Naive thymus-derived CD8-positive, alpha-beta T cell (primary cell): ENCODE measurements at regions of chr11 and their contacts with region 1.

Region 1: DNA sequence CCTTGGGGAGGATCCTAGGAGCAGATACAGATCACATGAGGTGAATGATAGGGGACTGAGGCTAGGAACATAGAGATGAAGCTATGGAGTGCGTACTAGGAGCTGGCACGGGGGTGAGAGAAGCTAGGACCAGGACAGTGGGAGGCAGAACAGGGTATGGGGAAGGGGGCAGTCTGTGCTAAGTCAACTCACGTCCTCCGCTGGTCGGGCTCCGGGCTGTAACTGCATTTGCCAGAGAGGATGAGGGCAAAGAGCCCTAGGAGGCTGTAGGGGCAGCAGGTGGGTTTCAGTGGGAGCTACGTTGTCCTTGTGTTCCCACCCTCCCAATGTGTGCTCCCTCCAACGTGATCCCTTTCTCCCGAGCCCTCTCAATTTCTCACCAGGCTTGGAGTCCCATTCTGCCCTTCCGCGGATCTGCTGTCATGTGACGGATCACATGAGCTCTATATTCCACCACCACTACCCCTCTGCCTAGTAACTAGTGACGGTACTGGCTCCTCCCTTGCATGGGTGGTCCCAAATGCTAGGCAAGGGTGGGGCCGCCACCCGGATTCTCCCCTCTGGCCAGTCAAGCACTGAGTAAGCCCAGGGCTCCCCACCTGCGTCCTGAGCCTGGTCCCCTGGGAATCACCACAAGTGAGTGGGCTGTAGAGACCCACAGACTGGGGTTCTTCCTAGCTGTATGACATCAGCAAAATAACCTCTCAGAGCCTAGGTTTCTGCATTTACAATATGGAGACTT is at the start of gene TPP1:
- DNase-seq: peak; percentile 70 to 96 (median 91)
- ATAC-seq: peak; percentile 93 to 97
- H3K4me3 Mint-ChIP-seq: no peak within 1 kb of the TSS
- H3K27ac Mint-ChIP-seq: no peak within 1 kb of the TSS
- H3K4me1 Mint-ChIP-seq: peaks cover 11 to 20% (median 14%) of the 10 kb centered on the region in 4 donors
- H3K27me3 Mint-ChIP-seq: no peaks in the 10 kb centered on the region
- polyA plus RNA-seq, gene TPP1: 84.8 to 107 (median 85.1) TPM

Region 2: DNA sequence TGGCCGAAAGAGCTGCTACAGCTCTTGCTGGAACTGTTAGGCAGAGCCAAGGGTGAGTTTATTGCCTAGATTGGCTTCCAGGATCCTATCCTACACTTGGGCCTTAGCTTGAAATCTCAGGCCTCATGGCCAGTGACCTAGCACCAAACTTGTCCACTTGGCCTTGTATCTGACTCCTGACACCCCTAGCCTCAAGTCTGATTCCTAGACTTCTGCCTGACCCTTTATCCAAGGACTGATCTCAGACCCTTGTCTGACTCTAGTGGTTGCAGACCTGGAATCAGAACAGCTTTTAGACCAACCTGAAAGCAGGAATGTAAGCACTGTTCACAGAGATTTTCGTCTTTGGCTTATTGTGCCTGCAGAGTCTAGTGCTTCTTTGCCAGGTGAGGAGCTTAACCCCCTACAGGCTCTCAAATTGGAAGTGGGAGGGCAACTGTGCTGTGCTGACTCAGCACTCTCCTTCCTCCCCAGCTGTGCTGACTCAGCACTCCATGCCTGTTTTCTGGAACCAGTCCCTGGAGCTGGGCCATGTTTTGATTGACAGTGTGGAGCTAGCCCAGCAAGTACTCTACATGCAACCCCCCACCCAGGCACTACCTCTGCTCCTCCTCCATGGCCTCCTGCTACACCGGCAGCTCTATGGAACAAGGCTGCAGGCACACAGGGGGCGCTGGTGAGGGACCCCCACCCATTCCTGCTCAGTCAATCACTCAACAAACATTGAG is 50.8 kb before region 1 on chr11:
- POLR2A ChIA-PET with region 1: no interaction called
- DNase-seq: peak in 1 of 10 donors; percentile 13
- ATAC-seq: no peak
- H3K4me3 Mint-ChIP-seq: no peak overlapping the region
- H3K27ac Mint-ChIP-seq: peak overlapping the region in 2 of 10 donors; percentile 9 to 67
- H3K4me1 Mint-ChIP-seq: peaks cover 0 to 10% (median 1%) of the 10 kb centered on the region in 4 donors
- H3K27me3 Mint-ChIP-seq: no peaks in the 10 kb centered on the region

Region 3: GRCh38 chr11:6603287-6604080 is 15.7 kb before region 1 on chr11 and contains the starts of genes ILK and RRP8:
- POLR2A ChIA-PET with region 1: interaction called, 50 read pairs
- DNase-seq: peak; percentile 68 to 92 (median 80)
- ATAC-seq: peak; percentile 80 to 85
- H3K4me3 Mint-ChIP-seq: no peak within 1 kb of the TSS
- H3K27ac Mint-ChIP-seq: no peak within 1 kb of the TSS
- H3K4me1 Mint-ChIP-seq: peaks cover 16 to 33% (median 29%) of the 10 kb centered on the region in 4 donors
- H3K27me3 Mint-ChIP-seq: no peaks in the 10 kb centered on the region
- polyA plus RNA-seq, gene ILK: 63.7 to 72.5 (median 68.5) TPM
- polyA plus RNA-seq, gene RRP8: 17.8 to 25.9 (median 20.9) TPM

Region 4: GRCh38 chr11:6646918-6647679 is 27.9 kb after region 1 on chr11:
- POLR2A ChIA-PET with region 1: interaction called, 38 read pairs
- DNase-seq: peak in 7 of 10 donors; percentile 18 to 45 (median 37)
- ATAC-seq: peak; percentile 73 to 78
- H3K4me3 Mint-ChIP-seq: no peak overlapping the region
- H3K27ac Mint-ChIP-seq: no peak overlapping the region
- H3K4me1 Mint-ChIP-seq: peaks cover 0 to 12% (median 0%) of the 10 kb centered on the region in 4 donors
- H3K27me3 Mint-ChIP-seq: no peaks in the 10 kb centered on the region

Region 5: DNA sequence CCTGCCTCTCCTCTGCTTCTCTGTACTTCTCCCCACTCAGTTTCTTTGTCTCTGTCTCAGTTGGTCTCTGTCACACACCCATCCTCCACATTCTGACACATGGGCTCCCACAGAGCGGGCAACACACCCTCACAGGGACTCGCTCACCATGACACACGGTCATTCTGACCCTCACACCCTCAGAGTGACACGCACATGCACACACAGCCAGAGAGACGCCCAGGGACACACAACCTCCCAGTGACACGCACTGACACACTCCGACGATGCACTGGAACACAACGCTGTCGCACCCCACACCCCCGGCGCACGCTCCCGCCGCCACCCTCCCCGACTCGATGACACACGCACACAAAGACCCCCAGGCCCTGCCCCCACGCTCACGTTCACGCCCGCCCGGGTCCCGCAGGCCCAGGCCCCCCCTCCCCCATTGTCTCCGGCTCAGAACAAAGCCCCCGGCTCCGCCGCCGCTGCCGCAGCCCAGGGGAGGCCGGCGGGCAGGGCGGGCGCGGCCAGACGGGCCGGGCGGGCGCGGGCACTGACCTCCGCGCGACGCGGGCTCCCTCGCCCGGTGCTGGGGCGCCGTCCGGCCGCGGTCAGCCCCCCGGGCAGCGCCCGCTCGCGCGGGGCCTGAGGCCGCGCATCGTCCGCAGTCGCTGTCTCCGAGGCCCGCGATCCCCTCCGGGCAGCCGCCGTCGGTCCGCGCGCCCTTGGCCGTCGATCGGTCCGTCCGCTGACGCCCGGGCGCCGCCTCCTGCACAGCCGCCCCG is 36.0 kb after region 1 on chr11:
- POLR2A ChIA-PET with region 1: interaction called, 38 read pairs
- DNase-seq: peak; percentile 15 to 73 (median 42)
- ATAC-seq: peak; percentile 63 to 66
- H3K4me3 Mint-ChIP-seq: no peak overlapping the region
- H3K27ac Mint-ChIP-seq: no peak overlapping the region
- H3K4me1 Mint-ChIP-seq: peaks cover 4 to 13% (median 10%) of the 10 kb centered on the region in 4 donors
- H3K27me3 Mint-ChIP-seq: no peaks in the 10 kb centered on the region

Region 6: GRCh38 chr11:6667733-6668374 is 48.7 kb after region 1 on chr11:
- POLR2A ChIA-PET with region 1: interaction called, 22 read pairs
- DNase-seq: peak in 6 of 10 donors; percentile 20 to 55 (median 39)
- ATAC-seq: peak; percentile 74 to 76
- H3K4me3 Mint-ChIP-seq: peak overlapping the region in 5 of 10 donors; percentile 19 to 54 (median 28)
- H3K27ac Mint-ChIP-seq: peak overlapping the region; percentile 6 to 93 (median 66)
- H3K4me1 Mint-ChIP-seq: peaks cover 42 to 70% (median 66%) of the 10 kb centered on the region in 4 donors
- H3K27me3 Mint-ChIP-seq: no peaks in the 10 kb centered on the region

Region 7: DNA sequence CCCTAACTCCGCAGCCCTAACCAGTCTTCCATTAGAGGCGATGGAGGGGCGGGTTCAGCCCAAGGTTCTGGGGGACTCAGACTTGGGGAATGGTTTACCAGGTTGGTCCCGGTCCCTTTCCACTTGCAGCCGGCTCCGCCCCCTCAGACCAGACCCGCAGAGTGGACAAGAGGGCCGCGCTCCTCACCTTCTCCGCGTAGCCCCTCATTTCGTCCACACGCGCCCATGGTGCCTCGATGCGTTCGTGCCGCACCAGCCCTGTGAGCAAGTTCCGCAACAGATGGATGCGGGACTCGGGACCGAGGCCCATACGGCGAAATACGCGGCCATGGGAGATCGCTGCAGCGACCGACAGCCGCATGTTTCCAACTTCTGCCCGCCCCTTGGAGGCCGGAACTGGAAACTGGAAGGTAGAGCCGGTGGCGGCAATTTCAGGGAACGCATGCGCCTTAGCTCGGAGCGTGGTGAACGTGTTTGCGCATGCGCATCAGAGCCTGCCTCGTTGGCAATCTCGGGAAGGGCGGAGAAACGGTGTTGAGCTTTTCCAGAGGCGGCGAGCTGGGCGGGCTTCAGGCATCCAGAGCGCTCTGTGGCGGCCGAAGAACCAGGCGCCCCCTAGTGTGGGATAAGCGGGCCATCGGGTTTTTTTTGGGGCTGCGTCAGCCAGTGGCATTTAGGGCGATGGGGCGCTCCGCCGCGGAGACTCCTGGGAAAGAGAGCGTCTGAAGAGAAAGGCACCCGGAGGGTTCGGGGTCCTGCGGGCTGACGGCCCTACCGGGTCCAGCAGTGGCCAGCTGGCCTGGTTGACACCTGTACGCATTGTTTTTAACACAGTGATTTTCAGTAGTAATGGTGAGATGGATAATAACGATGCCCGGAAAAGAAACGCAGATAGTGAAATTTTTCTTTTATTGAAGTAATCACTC is 64.0 kb after region 1 on chr11 and contains the start of gene MRPL17:
- POLR2A ChIA-PET with region 1: interaction called, 58 read pairs
- DNase-seq: peak; percentile 92 to 100 (median 99)
- ATAC-seq: peak; percentile 96
- H3K4me3 Mint-ChIP-seq: peak within 1 kb of the TSS; percentile 96 to 100 (median 99)
- H3K27ac Mint-ChIP-seq: peak within 1 kb of the TSS; percentile 97 to 100 (median 99)
- H3K4me1 Mint-ChIP-seq: peaks cover 23 to 49% (median 37%) of the 10 kb centered on the region in 4 donors
- H3K27me3 Mint-ChIP-seq: peaks cover 0 to 2% (median 0%) of the 10 kb centered on the region in 5 donors
- polyA plus RNA-seq, gene MRPL17: 16.2 to 23.6 (median 16.5) TPM

Region 8: GRCh38 chr11:6794639-6795038 is 175.5 kb after region 1 on chr11:
- POLR2A ChIA-PET with region 1: no interaction called
- DNase-seq: no peak
- ATAC-seq: no peak
- H3K4me3 Mint-ChIP-seq: no peak overlapping the region
- H3K27ac Mint-ChIP-seq: no peak overlapping the region
- H3K4me1 Mint-ChIP-seq: no peaks in the 10 kb centered on the region
- H3K27me3 Mint-ChIP-seq: peaks cover 0 to 8% (median 0%) of the 10 kb centered on the region in 5 donors